ENCODE measurements at regions of chr22 and their contacts with region 1.

Region 1: DNA sequence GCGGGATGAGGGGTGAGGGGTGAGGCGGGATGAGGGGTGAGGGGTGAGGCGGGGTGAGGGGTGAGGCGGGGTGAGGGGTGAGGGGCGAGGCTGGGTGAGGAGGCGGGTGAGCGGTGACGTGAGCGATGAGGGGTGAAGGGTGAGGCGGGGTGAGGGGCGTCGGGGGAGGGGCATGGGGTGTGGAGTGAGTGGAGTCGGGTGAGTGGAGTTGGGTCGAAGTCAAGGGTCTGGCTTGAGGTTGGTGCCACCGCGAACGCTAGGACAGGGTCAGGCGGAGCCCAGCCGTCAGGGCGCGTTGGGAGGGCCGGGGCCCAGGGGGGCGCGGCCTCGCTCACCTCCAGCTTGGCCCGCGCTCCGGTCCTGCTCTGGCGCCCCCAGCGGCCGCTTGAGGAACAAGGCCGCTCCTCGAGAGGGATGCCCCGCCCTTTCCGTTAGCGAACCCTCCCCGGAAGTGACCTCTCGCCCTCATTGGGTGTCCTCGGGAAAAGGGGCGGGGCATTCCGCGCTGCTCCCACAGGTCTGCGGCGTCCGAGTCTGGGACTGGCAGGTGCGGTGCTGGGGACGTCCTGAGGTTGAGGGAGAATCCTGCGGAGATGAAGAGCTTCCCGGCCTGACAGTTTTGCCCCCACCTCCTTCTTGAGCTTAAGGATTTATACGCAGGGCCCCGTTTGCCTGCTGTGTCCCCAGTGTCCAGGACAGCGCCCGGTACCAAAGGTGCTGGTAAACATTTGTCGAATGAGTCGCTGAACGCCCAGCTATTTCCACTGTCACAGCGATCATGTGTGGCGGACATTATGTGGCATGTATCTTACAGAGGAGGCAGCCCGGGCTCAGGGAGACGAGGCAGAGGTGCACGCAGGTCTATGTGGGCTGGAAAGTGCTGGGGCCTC is at the start of gene SYCE3:
- DNase-seq: peak; percentile 99
- H3K4me3 ChIP-seq: peak within 1 kb of the TSS; percentile 42
- H3K27ac ChIP-seq: peak within 1 kb of the TSS; percentile 73
- H3K4me1 ChIP-seq: peaks cover 6% of the 10 kb centered on the region
- H3K27me3 ChIP-seq: no peaks in the 10 kb centered on the region
- CTCF ChIP-seq: peak; percentile 96
- total RNA-seq, gene SYCE3: not detected

Region 2: DNA sequence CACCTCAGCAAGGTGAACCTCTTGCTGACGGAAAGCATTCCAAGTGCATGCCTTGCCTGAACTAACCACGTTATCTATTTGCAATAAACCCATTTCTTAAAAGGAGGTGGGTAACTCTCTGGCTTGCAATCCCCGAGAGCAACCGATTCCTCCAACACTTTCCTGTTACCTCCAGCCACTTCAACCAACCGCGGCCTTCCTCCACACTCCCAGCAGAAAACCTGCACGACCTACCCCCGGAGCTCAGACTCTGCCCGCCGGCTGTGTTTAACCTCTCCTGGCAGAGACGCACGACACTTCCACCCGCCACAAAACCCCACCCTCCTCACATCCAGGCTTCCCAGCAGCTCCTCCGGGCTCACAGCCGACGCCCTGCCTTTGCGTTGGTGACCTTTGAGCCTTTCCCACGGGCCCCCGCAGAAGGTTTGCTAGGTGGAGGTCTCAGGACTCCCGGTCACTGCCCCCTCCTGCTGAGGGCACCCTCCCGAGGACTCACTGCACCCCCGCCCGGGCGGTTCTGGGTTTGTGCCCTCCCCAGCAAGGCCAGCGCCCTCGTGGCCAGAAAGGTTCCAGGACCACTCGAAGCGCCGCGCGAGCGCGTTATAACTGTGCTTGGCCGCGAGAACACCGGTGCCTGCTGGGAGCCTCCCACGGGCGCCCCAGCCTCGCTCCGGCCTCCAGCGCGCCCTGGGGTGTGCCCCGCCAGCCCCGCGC is 37.9 kb before region 1 on chr22:
- intact Hi-C with region 1: loop called (anchors 5 kb)
- DNase-seq: peak; percentile 83
- H3K4me3 ChIP-seq: peak overlapping the region; percentile 85
- H3K27ac ChIP-seq: peak overlapping the region; percentile 100
- H3K4me1 ChIP-seq: peaks cover 16% of the 10 kb centered on the region
- H3K27me3 ChIP-seq: no peaks in the 10 kb centered on the region
- CTCF ChIP-seq: no peak

Region 3: DNA sequence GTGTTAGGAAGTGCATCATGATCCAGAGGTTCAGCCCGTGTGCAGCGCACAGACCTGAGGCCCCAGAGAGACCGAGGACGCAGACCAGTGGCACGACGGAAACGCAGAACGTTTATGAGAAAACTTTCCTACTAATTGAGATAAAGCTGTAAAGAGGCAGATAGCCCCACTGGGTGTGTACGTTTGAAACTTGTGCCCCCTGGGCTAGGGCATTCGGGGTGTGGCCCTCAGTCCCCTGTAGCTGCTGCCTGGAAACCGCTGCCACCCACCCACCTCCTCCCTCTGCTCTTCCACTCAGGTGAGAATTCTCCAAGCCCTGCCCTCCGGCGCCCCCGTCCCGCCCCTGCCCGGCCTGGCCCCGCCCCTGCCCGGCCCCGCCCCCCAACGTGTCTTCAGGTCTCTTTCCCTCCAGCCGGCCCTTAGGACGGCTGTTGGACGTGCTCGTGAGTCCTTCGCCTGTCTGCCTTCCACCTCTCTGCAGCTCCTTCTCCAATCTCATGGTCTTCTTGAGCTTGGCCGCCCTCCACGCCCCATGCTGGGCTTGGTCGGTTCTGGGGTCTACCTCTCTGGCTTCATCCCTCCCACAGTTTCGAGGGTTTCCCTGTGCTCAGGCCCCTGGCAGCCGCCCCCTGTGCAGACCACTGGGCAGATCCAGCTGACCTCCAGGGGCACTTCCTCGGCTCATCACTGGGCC is 49.9 kb after region 1 on chr22:
- intact Hi-C with region 1: loop called (anchors 10 kb)
- DNase-seq: peak; percentile 71
- H3K4me3 ChIP-seq: no peak overlapping the region
- H3K27ac ChIP-seq: peak overlapping the region; percentile 78
- H3K4me1 ChIP-seq: no peaks in the 10 kb centered on the region
- H3K27me3 ChIP-seq: no peaks in the 10 kb centered on the region
- CTCF ChIP-seq: no peak